HEK293 (cell line): ENCODE measurements at regions of chr17 and their contacts with region 1.

Region 1: DNA sequence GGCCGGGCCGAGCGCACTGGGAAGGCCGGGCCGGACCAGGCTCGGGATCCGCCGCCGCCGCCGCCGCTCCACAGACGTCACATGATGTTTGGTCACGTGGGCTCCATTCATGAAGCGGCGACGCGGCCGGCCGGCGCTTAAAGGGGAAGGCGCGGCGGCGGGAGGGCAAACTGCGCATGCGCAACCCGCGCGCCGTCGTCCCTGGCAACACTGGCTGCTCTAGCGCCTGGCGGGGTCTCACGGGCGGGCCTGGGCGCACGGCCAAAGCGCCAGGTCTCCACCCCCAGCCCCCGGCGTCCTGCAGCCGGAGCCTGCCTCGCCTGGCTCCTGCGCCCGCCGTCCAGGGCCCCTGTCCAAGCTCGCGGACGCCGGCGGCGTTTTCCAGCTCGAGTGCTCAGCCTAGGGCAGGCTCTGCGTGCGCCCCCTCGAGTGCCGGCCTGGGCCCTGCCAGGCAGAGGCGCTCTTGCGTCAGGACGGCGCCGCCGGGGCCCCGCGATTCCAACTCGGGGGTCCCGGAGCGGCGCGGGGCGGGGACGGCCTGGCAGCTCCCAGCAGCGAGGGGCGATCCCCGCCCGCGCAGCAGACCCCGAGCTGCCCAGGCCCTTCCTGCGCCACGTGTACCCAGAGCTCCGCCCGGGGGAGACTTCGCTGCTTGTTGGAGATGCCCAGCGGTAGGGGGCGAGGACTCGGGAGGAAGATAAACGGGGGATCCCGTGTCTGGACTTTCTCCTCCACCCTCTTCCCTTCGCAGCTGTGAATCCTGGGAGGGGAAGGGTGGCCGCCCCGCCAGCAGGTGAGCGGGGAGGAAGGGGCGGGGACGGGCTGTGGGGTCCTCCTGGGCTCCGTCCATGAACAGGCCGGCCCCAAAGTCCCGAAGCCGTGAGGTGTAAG is at the start of gene MAFG:
- H3K4me3 ChIP-seq: peak within 1 kb of the TSS; percentile 79
- H3K27ac ChIP-seq: peak within 1 kb of the TSS; percentile 90
- H3K4me1 ChIP-seq: peaks cover 3% of the 10 kb centered on the region; the same call in 1 of the 2 replicates
- CTCF ChIP-seq: 0 out of 2 replicates have a peak, but pooled peaks have one; percentile 35

Region 2: DNA sequence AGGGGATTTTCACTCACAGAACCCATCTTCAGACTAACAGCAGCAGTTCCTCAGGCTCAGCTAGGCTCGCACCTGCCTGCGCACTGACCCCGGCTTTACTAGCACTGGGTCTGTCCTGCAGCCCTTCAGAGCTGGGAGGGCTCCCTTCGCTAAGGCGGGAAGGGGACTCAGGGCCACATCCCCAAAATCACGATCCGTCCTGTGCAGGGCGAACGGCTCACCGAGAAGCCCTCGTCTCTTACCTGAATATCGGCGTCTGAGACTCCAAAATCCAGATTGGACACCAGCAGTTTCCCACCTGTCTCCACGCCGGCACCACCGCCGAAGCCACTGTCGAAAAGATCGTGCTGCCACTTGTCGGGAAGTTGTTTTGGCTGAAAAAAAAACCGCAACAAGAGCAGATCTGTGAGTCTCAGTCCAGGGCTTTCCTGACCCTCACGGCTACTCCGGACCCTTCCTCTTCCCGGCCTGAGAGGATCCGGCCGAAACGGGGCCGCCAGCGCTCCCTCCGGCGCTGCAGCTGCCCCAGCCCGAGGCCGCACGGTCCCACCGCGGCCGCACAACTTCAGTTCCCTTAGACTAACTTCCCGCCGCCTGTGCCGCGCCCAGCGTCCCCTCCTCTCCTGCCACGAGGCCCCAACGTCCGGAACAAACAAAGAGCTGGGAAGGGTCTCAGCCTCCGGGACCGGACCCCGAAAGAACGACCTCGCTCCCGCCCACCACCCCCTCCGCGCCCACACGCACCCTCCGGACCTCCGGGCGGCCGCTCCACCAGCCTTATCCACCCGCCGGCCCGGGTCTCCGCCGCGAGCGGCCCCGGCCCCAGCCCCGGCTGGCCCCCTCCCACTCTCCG is 37.2 kb before region 1 on chr17:
- CTCF ChIA-PET with region 1: interaction called, 3 read pairs
- POLR2A ChIA-PET with region 1: interaction called, 13 read pairs
- H3K4me3 ChIP-seq: peak overlapping the region; percentile 92
- H3K27ac ChIP-seq: peak overlapping the region; percentile 96
- H3K4me1 ChIP-seq: peaks cover 5% of the 10 kb centered on the region; the same call in 1 of the 2 replicates
- CTCF ChIP-seq: no peak

Region 3: GRCh38 chr17:81911277-81911961 is 16.5 kb before region 1 on chr17 and contains the start of gene PCYT2:
- CTCF ChIA-PET with region 1: interaction called, 4 read pairs
- POLR2A ChIA-PET with region 1: interaction called, 22 read pairs
- H3K4me3 ChIP-seq: peak within 1 kb of the TSS; percentile 52
- H3K27ac ChIP-seq: peak within 1 kb of the TSS; percentile 62; the same call in 1 of the 2 replicates
- H3K4me1 ChIP-seq: peaks cover 7% of the 10 kb centered on the region
- CTCF ChIP-seq: peak; percentile 49; the same call in 1 of the 2 replicates

Region 4: GRCh38 chr17:81917565-81918332 is 10.1 kb before region 1 on chr17 and contains the start of gene SIRT7:
- CTCF ChIA-PET with region 1: interaction called, 5 read pairs
- POLR2A ChIA-PET with region 1: interaction called, 22 read pairs
- H3K4me3 ChIP-seq: peak within 1 kb of the TSS; percentile 71
- H3K27ac ChIP-seq: peak within 1 kb of the TSS; percentile 65; the same call in 1 of the 2 replicates
- H3K4me1 ChIP-seq: 0 out of 2 replicates have a peak, but pooled peaks cover 2% of the 10 kb centered on the region
- CTCF ChIP-seq: no peak

Region 5: GRCh38 chr17:81941790-81942553 is 14.1 kb after region 1 on chr17:
- CTCF ChIA-PET with region 1: interaction called, 11 read pairs
- POLR2A ChIA-PET with region 1: interaction called, 3 read pairs
- H3K4me3 ChIP-seq: no peak overlapping the region
- H3K27ac ChIP-seq: no peak overlapping the region
- H3K4me1 ChIP-seq: peaks cover 2% of the 10 kb centered on the region; the same call in 1 of the 2 replicates
- CTCF ChIP-seq: no peak

Region 6: GRCh38 chr17:81959362-81960129 is 31.6 kb after region 1 on chr17:
- CTCF ChIA-PET with region 1: interaction called, 12 read pairs
- POLR2A ChIA-PET with region 1: no interaction called
- H3K4me3 ChIP-seq: peak overlapping the region; percentile 20
- H3K27ac ChIP-seq: peak overlapping the region; percentile 31; the same call in 1 of the 2 replicates
- H3K4me1 ChIP-seq: peaks cover 4% of the 10 kb centered on the region; the same call in 1 of the 2 replicates
- CTCF ChIP-seq: no peak